ENCODE measurements at regions of chr19 and their contacts with region 1.

Region 1: GRCh38 chr19:53394974-53395839 is at the start of gene ZNF765:
- DNase-seq: peak; percentile 92 to 99 (median 97)
- ATAC-seq: peak; percentile 100
- H3K4me3 ChIP-seq: peak within 1 kb of the TSS; percentile 97
- H3K4me3 Mint-ChIP-seq: peak within 1 kb of the TSS; percentile 88 to 97 (median 93)
- H3K27ac ChIP-seq: peak within 1 kb of the TSS; percentile 82
- H3K27ac Mint-ChIP-seq: peak within 1 kb of the TSS; percentile 89 to 97 (median 94)
- H3K4me1 ChIP-seq: peaks cover 5 to 8% of the 10 kb centered on the region in 2 donors
- H3K4me1 Mint-ChIP-seq: peaks cover 13 to 40% (median 31%) of the 10 kb centered on the region in 7 donors
- H3K27me3 ChIP-seq: no peaks in the 10 kb centered on the region
- H3K27me3 Mint-ChIP-seq: no peaks in the 10 kb centered on the region
- total RNA-seq, gene ZNF765: 5.1 to 19.5 (median 11.4) TPM

Region 2: DNA sequence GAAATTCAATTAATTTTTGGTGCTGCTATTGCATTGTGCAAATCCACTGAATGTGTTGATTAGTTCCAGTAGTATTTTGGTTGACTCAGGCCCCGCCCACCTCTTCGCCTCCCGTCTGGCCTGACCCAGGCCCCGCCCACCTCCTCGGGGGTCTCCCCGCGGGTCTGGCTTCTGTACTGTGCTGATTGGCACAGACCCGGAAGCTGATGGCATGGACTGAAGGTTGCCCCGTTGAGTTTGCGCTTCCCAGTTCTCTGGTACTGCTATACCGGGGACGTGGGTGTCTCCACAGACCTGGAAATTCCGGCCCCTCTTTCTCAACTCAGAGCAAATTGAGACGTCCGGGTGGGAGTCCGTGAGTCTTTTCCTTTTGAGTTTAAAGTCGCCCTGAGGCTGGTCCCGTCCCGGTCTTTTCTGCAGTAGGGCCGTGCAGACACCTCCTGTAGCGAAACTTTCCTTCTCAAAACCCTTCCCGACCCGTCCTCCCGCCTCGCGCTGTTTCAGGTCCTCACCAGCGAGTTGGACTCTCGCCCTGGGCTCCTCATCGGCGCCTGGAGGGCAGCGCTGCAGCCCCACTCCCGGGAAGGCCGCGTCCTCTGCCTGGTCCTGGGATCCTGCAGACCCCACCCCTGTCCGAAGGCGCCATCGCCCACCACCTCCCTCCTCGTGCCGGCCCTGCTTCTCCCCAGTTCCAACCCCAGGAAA is 810.3 kb before region 1 on chr19:
- CTCF ChIA-PET with region 1: no interaction called
- POLR2A ChIA-PET with region 1: no interaction called
- intact Hi-C with region 1: no loop called
- DNase-seq: no peak
- ATAC-seq: no peak
- H3K4me3 ChIP-seq: no peak overlapping the region
- H3K4me3 Mint-ChIP-seq: no peak overlapping the region
- H3K27ac ChIP-seq: no peak overlapping the region
- H3K27ac Mint-ChIP-seq: no peak overlapping the region
- H3K4me1 ChIP-seq: no peaks in the 10 kb centered on the region
- H3K4me1 Mint-ChIP-seq: no peaks in the 10 kb centered on the region
- H3K27me3 ChIP-seq: no peaks in the 10 kb centered on the region
- H3K27me3 Mint-ChIP-seq: no peaks in the 10 kb centered on the region

Region 3: DNA sequence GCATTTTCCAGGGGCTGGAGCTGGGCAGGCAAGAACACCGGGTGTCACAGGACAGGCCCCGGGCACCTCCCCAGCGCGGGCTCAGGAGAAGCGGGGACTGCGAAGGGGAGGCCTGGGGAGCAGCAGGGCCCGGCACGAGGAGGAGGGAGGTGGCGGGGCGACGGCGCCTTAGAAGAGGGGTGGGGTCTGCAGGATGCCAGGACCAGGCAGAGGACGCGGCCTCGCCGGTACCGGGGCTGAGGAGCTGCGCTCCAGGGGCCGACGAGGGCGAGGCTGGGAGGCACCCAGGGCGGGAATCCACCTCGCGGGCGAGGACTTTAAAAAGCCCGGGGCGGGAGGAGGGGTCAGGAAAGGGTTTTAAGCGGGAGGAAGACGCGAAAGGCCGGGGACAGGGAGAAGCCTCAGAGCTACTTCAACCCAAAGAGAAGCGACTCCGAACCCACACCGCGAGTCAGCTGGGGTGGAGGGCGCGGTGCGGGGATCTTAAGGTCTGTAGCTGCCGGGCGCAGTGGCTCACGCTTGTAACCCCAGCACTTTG is 237.0 kb before region 1 on chr19:
- CTCF ChIA-PET with region 1: no interaction called
- POLR2A ChIA-PET with region 1: no interaction called
- intact Hi-C with region 1: loop called in 1 of 2 experiments (anchors 1 kb)
- DNase-seq: peak in 5 of 9 donors; percentile 9 to 41 (median 26)
- ATAC-seq: peak; percentile 35
- H3K4me3 ChIP-seq: peak overlapping the region; percentile 97
- H3K4me3 Mint-ChIP-seq: peak overlapping the region; percentile 65 to 91 (median 86)
- H3K27ac ChIP-seq: peak overlapping the region; percentile 70
- H3K27ac Mint-ChIP-seq: peak overlapping the region; percentile 44 to 90 (median 85)
- H3K4me1 ChIP-seq: peaks cover 4 to 7% of the 10 kb centered on the region in 2 donors
- H3K4me1 Mint-ChIP-seq: peaks cover 12 to 32% (median 27%) of the 10 kb centered on the region in 7 donors
- H3K27me3 ChIP-seq: no peaks in the 10 kb centered on the region
- H3K27me3 Mint-ChIP-seq: no peaks in the 10 kb centered on the region

Region 4: DNA sequence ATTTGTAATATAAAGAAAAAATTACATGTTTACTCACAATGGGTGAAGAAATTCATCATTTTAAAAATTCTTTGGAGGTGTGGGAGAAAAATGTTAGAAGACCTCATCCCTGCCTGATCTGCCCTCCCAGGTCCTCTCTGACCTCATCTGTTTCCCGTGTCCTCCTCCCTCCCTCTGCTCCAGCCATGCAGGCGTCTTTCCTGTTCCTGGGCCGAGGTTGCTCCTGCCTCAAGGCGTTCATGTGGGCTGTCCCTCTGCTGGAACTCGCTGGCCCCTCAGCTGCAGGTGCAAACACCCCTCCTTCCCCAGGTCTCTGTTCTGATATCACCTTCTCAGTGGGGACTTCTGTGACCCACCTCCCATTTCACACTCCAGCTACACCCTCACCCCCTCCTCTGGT is 54.6 kb before region 1 on chr19:
- CTCF ChIA-PET with region 1: no interaction called
- POLR2A ChIA-PET with region 1: no interaction called
- intact Hi-C with region 1: no loop called
- DNase-seq: no peak
- ATAC-seq: no peak
- H3K4me3 ChIP-seq: no peak overlapping the region
- H3K4me3 Mint-ChIP-seq: peak overlapping the region in 1 of 10 donors; percentile 27
- H3K27ac ChIP-seq: no peak overlapping the region
- H3K27ac Mint-ChIP-seq: no peak overlapping the region
- H3K4me1 ChIP-seq: no peaks in the 10 kb centered on the region
- H3K4me1 Mint-ChIP-seq: peaks cover 3 to 19% (median 13%) of the 10 kb centered on the region in 7 donors
- H3K27me3 ChIP-seq: no peaks in the 10 kb centered on the region
- H3K27me3 Mint-ChIP-seq: no peaks in the 10 kb centered on the region

Region 5: DNA sequence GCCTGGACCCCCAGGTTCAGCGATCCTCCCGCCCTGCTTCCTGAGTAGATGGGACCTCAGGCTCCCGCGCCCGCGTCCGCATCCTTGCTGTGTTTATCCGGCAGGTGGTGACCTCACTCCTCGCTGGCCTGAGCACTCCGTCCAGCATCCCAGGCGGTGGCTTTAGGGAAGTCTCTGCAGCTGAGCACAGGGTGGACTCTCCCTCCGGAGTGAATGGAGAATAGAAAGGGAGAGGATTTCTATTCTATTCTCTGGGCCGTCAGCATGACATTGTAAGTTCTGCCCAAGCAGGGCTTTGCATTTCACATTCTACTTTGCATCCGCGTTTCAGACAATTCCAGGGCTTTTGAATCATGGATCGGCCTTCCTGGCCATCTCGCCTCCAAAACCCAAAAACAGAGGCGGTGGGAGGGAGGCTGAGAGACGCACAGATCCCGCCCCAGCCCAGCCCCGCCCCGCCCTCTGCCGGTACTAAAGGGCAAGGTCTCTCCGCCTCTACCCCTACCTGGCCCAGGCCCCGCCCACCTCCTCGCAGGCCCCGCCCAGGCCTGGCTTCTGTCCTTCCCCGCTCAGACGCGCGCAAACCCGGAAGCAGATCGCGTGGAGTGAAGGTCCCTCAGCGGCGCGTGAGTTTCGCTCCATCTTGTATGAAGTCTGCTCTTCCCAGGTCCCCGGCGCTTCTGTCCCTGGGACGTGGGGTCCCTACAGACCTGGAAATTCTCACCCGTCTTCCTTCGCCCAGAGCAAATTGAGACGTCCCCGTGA is 29.9 kb before region 1 on chr19 and contains the start of gene ZNF525:
- CTCF ChIA-PET with region 1: no interaction called
- POLR2A ChIA-PET with region 1: interaction called, 3 read pairs
- intact Hi-C with region 1: loop called (anchors 1 kb)
- DNase-seq: peak; percentile 94 to 97 (median 96)
- ATAC-seq: peak; percentile 100
- H3K4me3 ChIP-seq: peak within 1 kb of the TSS; percentile 96
- H3K4me3 Mint-ChIP-seq: peak within 1 kb of the TSS; percentile 94 to 98 (median 96)
- H3K27ac ChIP-seq: peak within 1 kb of the TSS; percentile 80
- H3K27ac Mint-ChIP-seq: peak within 1 kb of the TSS; percentile 91 to 98 (median 94)
- H3K4me1 ChIP-seq: no peaks in the 10 kb centered on the region
- H3K4me1 Mint-ChIP-seq: peaks cover 12 to 35% (median 31%) of the 10 kb centered on the region in 7 donors
- H3K27me3 ChIP-seq: no peaks in the 10 kb centered on the region
- H3K27me3 Mint-ChIP-seq: no peaks in the 10 kb centered on the region
- total RNA-seq, gene ZNF525: 11.5 to 33.7 (median 24.2) TPM

Region 6: DNA sequence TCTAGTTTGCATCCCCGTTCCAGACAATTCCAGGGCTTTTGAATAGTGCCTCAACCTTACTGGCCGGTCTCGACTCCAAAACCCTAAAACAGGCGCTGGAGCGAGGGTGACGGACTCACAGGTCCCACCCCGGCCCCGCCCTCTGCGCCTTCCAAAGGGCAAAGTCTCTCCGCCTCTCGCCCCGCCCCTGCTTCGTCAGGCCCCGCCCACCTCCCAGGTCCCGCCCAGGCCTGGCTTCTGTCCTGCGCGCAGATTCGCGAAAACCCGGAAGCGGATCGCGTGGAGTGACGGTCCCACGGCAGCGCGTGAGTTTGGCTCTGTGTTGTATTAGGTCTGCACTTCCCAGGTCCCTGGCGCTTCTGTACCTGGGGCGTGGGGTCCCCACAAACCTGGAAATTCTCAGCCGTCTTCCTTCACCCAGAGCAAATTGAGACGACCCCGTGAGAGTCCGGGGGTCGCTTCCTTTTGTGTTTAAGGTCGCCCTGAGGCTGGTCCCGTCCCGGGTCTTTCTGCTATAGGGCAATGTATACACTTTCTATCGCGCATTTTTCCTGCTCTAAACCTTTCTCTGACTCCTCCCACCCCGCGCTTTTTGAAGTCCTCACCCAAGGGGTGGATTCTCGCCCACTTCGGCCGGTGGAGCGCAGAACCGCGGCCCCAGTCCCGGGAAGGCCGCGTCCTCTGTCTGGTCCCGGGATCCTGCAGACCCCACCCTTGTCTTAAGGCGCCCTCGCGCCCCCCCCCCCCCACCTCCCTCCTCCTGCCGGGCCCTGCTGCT is 72.5 kb after region 1 on chr19 and contains the start of gene ZNF813:
- CTCF ChIA-PET with region 1: no interaction called
- POLR2A ChIA-PET with region 1: no interaction called
- intact Hi-C with region 1: loop called in 1 of 2 experiments (anchors 1 kb)
- DNase-seq: peak; percentile 81 to 95 (median 92)
- ATAC-seq: peak; percentile 100
- H3K4me3 ChIP-seq: peak within 1 kb of the TSS; percentile 74
- H3K4me3 Mint-ChIP-seq: peak within 1 kb of the TSS; percentile 88 to 96 (median 94)
- H3K27ac ChIP-seq: peak within 1 kb of the TSS; percentile 73
- H3K27ac Mint-ChIP-seq: peak within 1 kb of the TSS; percentile 76 to 96 (median 90)
- H3K4me1 ChIP-seq: no peaks in the 10 kb centered on the region
- H3K4me1 Mint-ChIP-seq: peaks cover 20 to 45% (median 31%) of the 10 kb centered on the region in 7 donors
- H3K27me3 ChIP-seq: no peaks in the 10 kb centered on the region
- H3K27me3 Mint-ChIP-seq: peaks cover 0 to 24% (median 12%) of the 10 kb centered on the region in 5 donors
- total RNA-seq, gene ZNF813: 2.5 to 11.2 (median 4.6) TPM